SK-N-SH (cell line): ENCODE measurements at regions of chr6 and their contacts with region 1.

Region 1: DNA sequence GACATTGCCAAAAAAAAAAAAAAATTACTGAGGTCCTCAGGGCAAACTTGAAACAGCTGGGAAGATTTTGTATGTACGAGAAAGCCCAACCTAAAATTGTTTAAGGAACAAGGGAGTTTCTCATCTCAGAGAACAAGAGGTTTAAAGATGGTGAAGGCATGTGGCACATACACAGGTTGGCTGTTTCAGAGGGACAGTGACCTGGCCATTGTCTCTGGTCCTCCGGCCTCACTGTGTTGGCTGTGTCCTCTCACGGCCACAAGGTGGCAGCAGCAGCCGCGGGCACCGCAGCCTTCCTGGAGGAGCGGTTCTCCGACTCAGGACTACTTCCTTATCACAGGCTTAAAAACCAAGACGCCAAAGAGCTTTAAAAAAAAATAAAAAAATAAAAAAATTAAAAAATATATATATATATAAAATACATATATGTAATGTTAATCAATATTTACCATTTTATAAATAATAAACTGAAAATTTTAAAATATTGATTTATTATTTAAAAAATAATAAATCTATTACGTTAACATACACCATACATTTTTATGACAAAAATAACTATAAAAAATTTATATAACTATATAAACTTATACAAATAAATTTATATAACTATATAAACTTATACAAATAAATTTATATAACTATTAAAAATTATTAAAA is 52.8 kb downstream of the GTF2H5 start:
- DNase-seq: peak; percentile 85
- H3K4me3 ChIP-seq: no peak overlapping the region; a peak in 1 of 4 replicates
- H3K27ac ChIP-seq: no peak overlapping the region
- H3K4me1 ChIP-seq: peaks cover 0 to 3% of the 10 kb centered on the region in 2 experiments; a peak in 1 of 4 replicates
- H3K27me3 ChIP-seq: no peaks in the 10 kb centered on the region
- CTCF ChIP-seq: peak; percentile 93
- EP300 ChIP-seq: no peak
- RAD21 ChIP-seq: peak; percentile 99

Region 2: DNA sequence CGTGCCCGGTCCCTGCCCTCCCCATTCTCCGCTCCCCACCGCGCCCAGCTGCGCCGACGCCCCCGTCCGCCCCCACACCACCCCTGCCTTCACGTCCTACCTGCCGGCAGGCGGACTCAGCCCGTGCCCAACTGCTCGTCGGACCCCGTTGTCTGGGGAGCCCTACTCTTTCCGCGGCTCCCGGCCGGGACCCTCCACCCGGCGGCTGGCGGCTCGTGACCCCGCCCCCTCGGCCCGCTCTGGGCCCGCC is 52.9 kb before region 1 on chr6 and contains the start of gene SERAC1:
- CTCF ChIA-PET with region 1: no interaction called
- POLR2A ChIA-PET with region 1: no interaction called
- DNase-seq: no peak
- H3K4me3 ChIP-seq: peak within 1 kb of the TSS; percentile 85 to 89
- H3K27ac ChIP-seq: peak within 1 kb of the TSS; percentile 85 to 98
- H3K4me1 ChIP-seq: peaks cover 2 to 19% of the 10 kb centered on the region in 2 experiments
- H3K27me3 ChIP-seq: no peaks in the 10 kb centered on the region
- CTCF ChIP-seq: no peak
- EP300 ChIP-seq: no peak
- RAD21 ChIP-seq: no peak
- polyA plus RNA-seq, gene SERAC1: 5.6 and 8.9 TPM in 2 replicates

Region 3: GRCh38 chr6:158399040-158399700 is 178.3 kb after region 1 on chr6:
- CTCF ChIA-PET with region 1: interaction called, 10 read pairs
- POLR2A ChIA-PET with region 1: no interaction called
- DNase-seq: no peak
- H3K4me3 ChIP-seq: no peak overlapping the region
- H3K27ac ChIP-seq: peak overlapping the region in 1 of 2 experiments; percentile 30; a peak in 1 of 4 replicates
- H3K4me1 ChIP-seq: peaks cover 0 to 39% of the 10 kb centered on the region in 2 experiments; a peak in 2 of 4 replicates
- H3K27me3 ChIP-seq: no peaks in the 10 kb centered on the region
- CTCF ChIP-seq: no peak
- EP300 ChIP-seq: no peak
- RAD21 ChIP-seq: no peak

Region 4: GRCh38 chr6:158518191-158519127 is 297.5 kb after region 1 on chr6:
- CTCF ChIA-PET with region 1: interaction called, 33 read pairs
- POLR2A ChIA-PET with region 1: no interaction called
- DNase-seq: peak; percentile 83
- H3K4me3 ChIP-seq: peak overlapping the region; percentile 38 to 67
- H3K27ac ChIP-seq: peak overlapping the region; percentile 58 to 72
- H3K4me1 ChIP-seq: peaks cover 5 to 12% of the 10 kb centered on the region in 2 experiments; a peak in 3 of 4 replicates
- H3K27me3 ChIP-seq: no peaks in the 10 kb centered on the region
- CTCF ChIP-seq: peak; percentile 77
- EP300 ChIP-seq: no peak
- RAD21 ChIP-seq: peak; percentile 74

Region 5: DNA sequence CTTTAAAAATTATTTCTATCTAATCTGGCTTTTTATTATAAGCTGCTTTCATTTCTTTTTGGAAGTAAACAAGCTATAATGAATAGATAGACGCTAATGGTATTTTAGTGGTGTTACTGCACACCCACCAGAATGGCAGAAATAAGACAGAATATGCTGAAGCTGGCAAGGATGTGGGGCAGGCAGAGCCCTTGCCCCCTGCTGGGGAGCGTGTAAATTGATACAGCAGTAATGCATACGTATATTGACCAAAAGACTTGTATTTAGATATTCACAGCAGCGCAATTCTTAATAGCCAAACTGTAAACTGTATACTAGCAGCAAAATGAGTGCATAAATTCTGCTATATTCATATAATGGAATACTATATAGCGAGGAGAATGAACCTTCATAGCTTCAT is 374.3 kb after region 1 on chr6:
- CTCF ChIA-PET with region 1: interaction called, 13 read pairs
- POLR2A ChIA-PET with region 1: no interaction called
- DNase-seq: peak; percentile 42
- H3K4me3 ChIP-seq: no peak overlapping the region
- H3K27ac ChIP-seq: no peak overlapping the region
- H3K4me1 ChIP-seq: no peaks in the 10 kb centered on the region; a peak in 1 of 4 replicates
- H3K27me3 ChIP-seq: no peaks in the 10 kb centered on the region
- CTCF ChIP-seq: peak; percentile 52
- EP300 ChIP-seq: no peak
- RAD21 ChIP-seq: peak; percentile 20; the same call in 1 of the 2 replicates

Region 6: DNA sequence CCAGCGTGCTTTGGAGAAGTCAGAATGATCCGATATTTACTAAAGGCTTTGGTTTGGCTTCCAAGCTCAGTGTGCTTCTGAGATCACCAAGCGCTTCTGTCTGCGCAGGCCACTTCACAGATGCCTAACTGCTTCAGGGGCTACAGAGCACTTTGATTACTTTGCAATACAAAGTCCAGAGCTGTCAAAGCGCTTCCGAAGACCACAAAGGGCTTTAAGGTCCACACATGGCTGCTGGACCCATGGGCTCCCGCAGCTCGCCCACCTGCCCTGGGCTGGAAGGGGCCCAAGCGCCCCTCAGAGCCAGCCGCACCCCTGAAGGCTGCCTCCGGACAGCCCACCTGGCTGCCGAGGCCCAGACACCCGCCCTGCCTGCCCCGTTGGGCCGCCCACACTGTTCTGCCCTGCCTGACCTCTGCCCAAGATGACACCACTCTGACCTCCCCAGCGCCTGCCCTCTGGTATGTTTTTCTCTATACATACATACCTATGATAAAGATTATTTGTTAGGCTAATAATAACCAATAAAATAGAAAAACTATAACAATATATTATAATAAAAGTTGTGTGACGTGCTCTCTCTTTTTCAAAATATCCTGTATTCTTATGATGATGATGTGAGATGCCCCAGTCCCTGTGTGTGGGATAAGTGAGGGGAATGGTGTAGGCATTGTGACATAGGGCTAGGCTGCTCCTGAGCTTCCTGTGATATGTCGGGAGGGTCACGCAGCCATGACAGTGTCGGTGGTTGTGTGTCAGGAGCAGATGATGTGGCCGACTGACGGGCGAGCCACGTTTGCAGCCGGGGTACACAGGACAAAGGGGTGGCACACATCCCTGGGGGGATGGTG is 401.0 kb after region 1 on chr6:
- CTCF ChIA-PET with region 1: interaction called, 24 read pairs
- POLR2A ChIA-PET with region 1: no interaction called
- DNase-seq: peak; percentile 85
- H3K4me3 ChIP-seq: no peak overlapping the region; a peak in 1 of 4 replicates
- H3K27ac ChIP-seq: peak overlapping the region in 1 of 2 experiments; percentile 99; a peak in 2 of 4 replicates
- H3K4me1 ChIP-seq: peaks cover 0 to 45% of the 10 kb centered on the region in 2 experiments; a peak in 2 of 4 replicates
- H3K27me3 ChIP-seq: no peaks in the 10 kb centered on the region
- CTCF ChIP-seq: no peak
- EP300 ChIP-seq: peak in 1 of 2 experiments; percentile 87; a peak in 2 of 4 replicates
- RAD21 ChIP-seq: no peak; the same call in 1 of the 2 replicates

Region 7: GRCh38 chr6:158686791-158687381 is 466.0 kb after region 1 on chr6:
- CTCF ChIA-PET with region 1: interaction called, 16 read pairs
- POLR2A ChIA-PET with region 1: no interaction called
- DNase-seq: no peak
- H3K4me3 ChIP-seq: no peak overlapping the region
- H3K27ac ChIP-seq: no peak overlapping the region
- H3K4me1 ChIP-seq: no peaks in the 10 kb centered on the region
- H3K27me3 ChIP-seq: no peaks in the 10 kb centered on the region
- CTCF ChIP-seq: no peak
- EP300 ChIP-seq: no peak
- RAD21 ChIP-seq: no peak